ENCODE measurements at regions of chr4 and their contacts with region 1.

Region 1: GRCh38 chr4:152735396-152735859 is 44.1 kb downstream of the TIGD4 start:
- DNase-seq: no peak
- H3K4me3 Mint-ChIP-seq: no peak overlapping the region
- H3K27ac Mint-ChIP-seq: no peak overlapping the region
- H3K4me1 Mint-ChIP-seq: peaks cover 4% of the 10 kb centered on the region
- H3K27me3 Mint-ChIP-seq: peaks cover 6% of the 10 kb centered on the region

Region 2: GRCh38 chr4:152032722-152033131 is 702.7 kb before region 1 on chr4:
- intact Hi-C with region 1: no loop called
- DNase-seq: no peak
- H3K4me3 Mint-ChIP-seq: no peak overlapping the region
- H3K27ac Mint-ChIP-seq: no peak overlapping the region
- H3K4me1 Mint-ChIP-seq: no peaks in the 10 kb centered on the region
- H3K27me3 Mint-ChIP-seq: no peaks in the 10 kb centered on the region

Region 3: DNA sequence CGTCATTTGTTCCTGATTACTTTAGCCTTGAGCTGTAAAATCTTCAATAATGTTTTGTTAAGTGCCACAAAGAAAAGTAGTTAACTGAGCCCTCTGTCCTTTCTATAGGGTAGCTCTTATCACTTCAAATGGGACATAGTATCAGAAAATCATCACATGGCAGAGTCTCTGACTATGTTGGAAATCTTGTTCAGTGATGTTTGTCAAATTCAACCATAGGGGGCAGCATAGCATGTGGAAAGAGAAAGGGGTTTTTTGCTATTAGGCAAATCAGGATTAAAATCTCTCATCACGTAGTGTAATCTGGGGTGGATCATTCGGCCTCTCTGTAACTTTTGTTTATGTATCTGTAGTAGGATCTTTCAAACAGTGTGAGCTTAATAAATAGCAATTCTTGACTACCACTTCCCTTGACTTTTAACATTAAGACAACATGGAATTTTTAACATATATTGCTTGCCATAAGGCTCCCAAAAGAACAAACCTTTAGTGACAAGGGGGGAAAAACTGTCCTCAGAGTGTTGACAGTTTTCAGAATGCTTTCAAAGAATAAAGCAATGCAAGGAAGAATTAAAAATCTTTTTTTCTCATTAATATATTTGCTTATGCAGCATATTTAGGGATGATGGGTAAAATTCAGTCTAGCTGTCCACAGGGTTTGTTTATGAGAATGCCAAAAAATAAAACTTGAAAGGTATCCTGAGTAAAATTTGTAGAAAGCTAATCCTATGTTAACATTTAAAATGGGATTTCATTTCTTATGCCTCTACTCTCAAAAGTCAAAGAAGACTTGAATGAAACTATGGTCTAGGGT is 326.7 kb before region 1 on chr4:
- intact Hi-C with region 1: loop called (anchors 1 kb)
- DNase-seq: no peak
- H3K4me3 Mint-ChIP-seq: no peak overlapping the region
- H3K27ac Mint-ChIP-seq: no peak overlapping the region
- H3K4me1 Mint-ChIP-seq: peaks cover 18% of the 10 kb centered on the region
- H3K27me3 Mint-ChIP-seq: no peaks in the 10 kb centered on the region

Region 4: DNA sequence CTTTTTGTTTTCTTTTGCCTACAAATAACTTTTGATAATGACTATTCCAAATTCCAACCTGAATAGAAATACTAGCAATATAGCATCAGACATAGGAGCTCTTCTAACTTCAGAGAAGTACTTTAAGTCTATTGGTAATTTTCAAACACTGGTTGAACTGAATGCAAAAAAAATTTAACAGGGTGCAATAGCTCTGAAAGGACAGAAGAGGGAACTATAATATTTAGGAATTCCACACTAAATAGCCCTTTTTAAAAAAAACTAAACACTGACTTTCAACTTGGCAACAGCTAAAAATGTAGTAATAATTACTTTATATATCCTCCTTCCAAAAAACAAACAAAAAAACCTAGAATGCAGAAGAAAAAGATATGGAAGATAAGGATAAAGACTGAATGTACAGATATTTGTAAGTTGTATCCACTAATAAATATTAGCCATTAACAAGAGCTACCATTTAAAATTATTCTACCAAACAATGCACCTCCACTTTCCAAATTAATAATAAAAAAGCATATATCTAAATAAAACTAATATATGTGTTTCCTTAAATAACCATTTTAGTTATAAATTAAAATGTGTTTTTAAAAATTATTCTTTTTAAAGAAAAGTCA is 280.9 kb before region 1 on chr4:
- intact Hi-C with region 1: loop called (anchors 1 kb)
- DNase-seq: no peak
- H3K4me3 Mint-ChIP-seq: no peak overlapping the region
- H3K27ac Mint-ChIP-seq: no peak overlapping the region
- H3K4me1 Mint-ChIP-seq: peaks cover 34% of the 10 kb centered on the region
- H3K27me3 Mint-ChIP-seq: no peaks in the 10 kb centered on the region

Region 5: DNA sequence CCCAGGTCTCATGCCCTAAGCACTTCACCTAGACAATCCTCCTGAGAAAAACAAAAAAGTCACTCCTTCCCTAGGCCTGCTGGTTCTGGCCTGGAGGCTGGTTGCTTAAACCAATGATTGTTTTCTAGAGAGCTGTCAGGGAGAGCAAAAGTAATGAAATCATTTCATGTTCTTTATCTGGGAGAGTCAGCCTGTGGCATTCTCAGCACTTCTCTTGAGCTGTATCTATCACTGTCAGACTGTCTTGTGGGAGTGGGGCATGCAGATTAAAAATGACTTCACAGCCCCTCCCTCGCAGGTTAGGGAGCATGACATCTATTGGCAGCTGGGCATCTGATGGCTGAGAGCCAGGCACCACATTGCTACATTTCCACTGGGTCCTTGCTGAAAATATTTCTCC is 35.3 kb before region 1 on chr4:
- intact Hi-C with region 1: no loop called
- DNase-seq: no peak
- H3K4me3 Mint-ChIP-seq: no peak overlapping the region
- H3K27ac Mint-ChIP-seq: no peak overlapping the region
- H3K4me1 Mint-ChIP-seq: peaks cover 23% of the 10 kb centered on the region
- H3K27me3 Mint-ChIP-seq: peaks cover 15% of the 10 kb centered on the region

Measured in activated T-helper 1 cell treated with anti-CD3 and anti-CD28 coated beads, Interleukin-12 subunit alpha, Interleukin-12 subunit beta, Interleukin-2, Interleukin-4 antibody, amounts not matched to agents 30 ng/mL and 10 ng/mL and 1 ng/mL, durations not matched to agents 14 hours and 24 hours and 36 hours (primary cell).